Activated CD4-positive, alpha-beta memory T cell treated with anti-CD3 and anti-CD28 coated beads for 36 hours (primary cell): ENCODE measurements at regions of chr7 and their contacts with region 1.

Region 1: DNA sequence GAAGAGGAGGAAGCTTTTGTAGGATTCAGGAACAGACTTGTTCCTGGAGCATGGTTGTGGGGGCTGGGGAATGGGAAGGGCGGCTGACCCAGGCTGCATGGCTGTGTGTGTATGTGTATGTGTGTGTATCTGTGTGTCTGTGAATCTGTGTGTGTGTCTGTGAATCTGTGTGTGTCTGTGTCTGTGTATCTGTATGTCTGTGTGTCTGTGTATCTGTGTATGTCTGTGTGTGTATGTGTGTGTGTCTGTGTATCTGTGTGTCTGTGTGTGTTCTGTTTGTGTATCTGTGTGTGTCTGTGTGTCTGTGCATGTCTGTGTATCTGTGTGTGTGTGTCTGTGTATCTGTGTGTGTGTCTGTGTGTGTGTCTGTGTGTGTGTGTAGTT is 6.6 kb upstream of the STX1A start:
- DNase-seq: no peak
- H3K4me3 Mint-ChIP-seq: no peak overlapping the region
- H3K27ac Mint-ChIP-seq: no peak overlapping the region
- H3K4me1 Mint-ChIP-seq: no peaks in the 10 kb centered on the region
- H3K27me3 Mint-ChIP-seq: peaks cover 5% of the 10 kb centered on the region

Region 2: DNA sequence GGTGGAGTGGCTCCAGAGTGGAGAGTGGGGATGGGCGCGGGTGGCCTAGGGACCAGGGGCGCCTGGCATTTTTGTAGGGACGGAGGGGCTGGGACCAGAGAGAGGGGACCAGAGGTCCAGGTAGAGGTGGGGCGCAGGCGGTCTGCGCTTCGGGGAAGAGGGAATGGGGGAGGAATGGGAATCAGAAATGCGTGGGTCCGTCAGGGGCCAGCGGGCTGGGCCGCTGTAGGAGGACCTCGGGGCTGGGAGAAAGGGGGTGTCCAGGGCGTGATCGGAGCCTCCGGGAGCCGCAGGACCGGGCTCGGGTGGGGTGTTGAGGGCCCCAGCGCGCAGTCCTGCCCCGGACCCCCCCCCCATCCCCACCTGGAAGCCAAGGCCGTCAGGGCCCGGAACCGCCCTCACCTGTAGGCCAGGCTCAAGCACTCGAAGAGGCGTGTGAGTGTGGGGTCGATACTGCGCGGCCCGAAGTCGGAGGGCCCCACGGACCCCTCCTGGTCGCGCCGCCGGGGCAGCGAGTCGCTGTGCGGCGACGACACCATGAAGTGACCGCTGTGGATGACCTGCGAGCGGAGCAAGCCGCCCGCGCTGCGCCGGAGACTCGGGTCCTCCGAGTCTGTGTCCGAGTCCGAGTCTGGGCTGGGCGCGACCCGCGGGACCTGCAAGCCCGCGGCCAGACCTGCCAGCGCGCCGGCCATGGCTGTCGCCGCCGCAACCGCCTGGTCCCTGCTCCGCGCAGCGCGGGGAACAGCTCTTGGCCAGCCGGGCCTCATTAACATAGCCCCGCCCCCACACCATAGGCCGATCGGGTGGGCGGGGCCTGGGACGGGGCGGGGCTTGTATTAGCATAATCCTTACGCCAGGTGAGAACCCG is 102.0 kb before region 1 on chr7 and contains the start of gene MLXIPL:
- CTCF ChIA-PET with region 1: interaction called, 13 read pairs
- POLR2A ChIA-PET with region 1: no interaction called
- intact Hi-C with region 1: no loop called
- DNase-seq: peak; percentile 74
- H3K4me3 Mint-ChIP-seq: no peak within 1 kb of the TSS
- H3K27ac Mint-ChIP-seq: no peak within 1 kb of the TSS
- H3K4me1 Mint-ChIP-seq: peaks cover 6% of the 10 kb centered on the region
- H3K27me3 Mint-ChIP-seq: peaks cover 37% of the 10 kb centered on the region
- total RNA-seq, gene MLXIPL: not detected

Region 3: DNA sequence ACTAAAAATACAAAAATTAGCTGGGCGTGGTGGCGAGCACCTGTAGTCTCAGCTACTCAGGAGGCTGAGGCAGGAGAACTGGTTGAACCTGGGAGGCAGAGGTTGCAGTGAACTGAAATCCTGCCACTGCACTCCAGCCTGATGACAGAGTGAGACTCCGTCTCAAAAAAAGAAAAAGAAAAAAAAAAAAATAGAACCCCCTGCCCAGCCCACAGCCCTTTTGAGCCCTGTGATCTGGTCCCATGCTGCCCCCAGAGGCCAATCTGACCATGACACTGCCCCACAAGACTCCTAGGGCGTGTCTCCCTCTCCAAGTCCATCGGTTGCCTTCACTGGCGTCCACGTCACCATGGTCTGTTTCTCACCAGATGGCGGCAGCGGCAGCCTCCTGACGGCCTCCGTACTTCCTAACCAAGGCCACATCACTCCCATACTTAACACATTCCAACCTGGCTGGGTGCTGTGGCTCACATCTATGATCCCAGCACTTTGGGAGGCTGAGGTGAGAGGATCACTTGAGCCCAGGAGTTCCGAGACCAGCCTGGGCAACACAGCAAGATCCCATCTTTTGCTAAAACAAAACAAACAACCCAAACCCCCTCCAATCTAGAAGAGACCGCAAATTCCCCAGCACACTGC is 24.6 kb before region 1 on chr7:
- CTCF ChIA-PET with region 1: interaction called, 10 read pairs
- POLR2A ChIA-PET with region 1: no interaction called
- intact Hi-C with region 1: no loop called
- DNase-seq: peak; percentile 44
- H3K4me3 Mint-ChIP-seq: no peak overlapping the region
- H3K27ac Mint-ChIP-seq: no peak overlapping the region
- H3K4me1 Mint-ChIP-seq: peaks cover 3% of the 10 kb centered on the region
- H3K27me3 Mint-ChIP-seq: no peaks in the 10 kb centered on the region

Region 4: DNA sequence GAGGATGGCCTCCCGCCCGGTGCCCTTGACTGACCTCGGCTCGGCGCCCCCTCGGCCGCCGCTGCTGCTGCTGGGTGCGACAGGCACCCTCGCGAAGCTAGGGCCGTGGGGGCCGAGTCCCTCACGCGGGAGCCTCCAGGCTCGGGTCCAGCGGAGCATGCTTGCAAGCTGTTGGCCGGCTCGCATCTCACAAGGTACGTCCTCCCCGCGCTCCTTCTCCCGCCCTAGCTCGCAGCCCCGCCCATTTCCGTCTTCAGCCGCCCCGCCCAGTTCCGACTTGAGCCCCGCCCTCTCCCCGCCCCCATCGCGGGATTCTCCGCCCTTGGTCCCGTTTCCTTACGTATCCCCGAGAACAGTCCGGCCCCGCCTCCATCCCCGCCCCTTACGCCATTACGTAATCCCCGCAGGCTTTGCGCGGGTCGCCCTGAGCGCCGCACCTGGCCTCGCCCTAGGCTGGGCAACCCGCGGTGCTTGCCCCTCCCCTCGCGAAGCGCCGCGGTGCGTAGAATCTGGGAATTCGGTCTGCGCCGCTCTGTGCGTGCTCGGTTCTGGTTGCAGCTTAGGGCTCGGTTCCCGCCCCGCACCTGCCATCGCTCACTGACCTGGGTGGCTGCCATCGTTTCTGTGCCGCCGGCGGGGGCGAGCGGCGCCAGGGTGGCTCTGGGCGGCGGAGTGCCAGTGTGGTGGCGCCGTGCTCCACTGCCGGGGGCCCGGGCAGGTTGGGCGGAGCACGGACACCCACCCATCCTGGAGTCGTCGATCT is 12.7 kb after region 1 on chr7 and contains the start of gene ABHD11:
- CTCF ChIA-PET with region 1: interaction called, 12 read pairs
- POLR2A ChIA-PET with region 1: no interaction called
- intact Hi-C with region 1: no loop called
- DNase-seq: peak; percentile 99
- H3K4me3 Mint-ChIP-seq: peak within 1 kb of the TSS; percentile 91
- H3K27ac Mint-ChIP-seq: peak within 1 kb of the TSS; percentile 82
- H3K4me1 Mint-ChIP-seq: peaks cover 13% of the 10 kb centered on the region
- H3K27me3 Mint-ChIP-seq: no peaks in the 10 kb centered on the region
- total RNA-seq, gene ABHD11: 14.7 to 16.8 TPM

Region 5: GRCh38 chr7:73779517-73779916 is 53.4 kb after region 1 on chr7:
- CTCF ChIA-PET with region 1: no interaction called
- POLR2A ChIA-PET with region 1: no interaction called
- intact Hi-C with region 1: no loop called
- DNase-seq: no peak
- H3K4me3 Mint-ChIP-seq: no peak overlapping the region
- H3K27ac Mint-ChIP-seq: no peak overlapping the region
- H3K4me1 Mint-ChIP-seq: peaks cover 3% of the 10 kb centered on the region
- H3K27me3 Mint-ChIP-seq: peaks cover 8% of the 10 kb centered on the region